CD8-positive, alpha-beta T cell (primary cell): ENCODE measurements at regions of chr10 and their contacts with region 1.

Region 1: GRCh38 chr10:70106958-70107791 is 25.4 kb downstream of the AIFM2 start:
- DNase-seq: peak in 3 of 9 experiments; percentile 27 to 44 (median 36)
- ATAC-seq: peak; percentile 40
- H3K4me3 ChIP-seq: no peak overlapping the region
- H3K4me3 Mint-ChIP-seq: no peak overlapping the region
- H3K27ac ChIP-seq: no peak overlapping the region
- H3K27ac Mint-ChIP-seq: peak overlapping the region; percentile 22
- H3K4me1 ChIP-seq: no peaks in the 10 kb centered on the region
- H3K4me1 Mint-ChIP-seq: no peaks in the 10 kb centered on the region
- H3K27me3 ChIP-seq: no peaks in the 10 kb centered on the region
- H3K27me3 Mint-ChIP-seq: no peaks in the 10 kb centered on the region
- CTCF ChIP-seq: peak; percentile 23

Region 2: DNA sequence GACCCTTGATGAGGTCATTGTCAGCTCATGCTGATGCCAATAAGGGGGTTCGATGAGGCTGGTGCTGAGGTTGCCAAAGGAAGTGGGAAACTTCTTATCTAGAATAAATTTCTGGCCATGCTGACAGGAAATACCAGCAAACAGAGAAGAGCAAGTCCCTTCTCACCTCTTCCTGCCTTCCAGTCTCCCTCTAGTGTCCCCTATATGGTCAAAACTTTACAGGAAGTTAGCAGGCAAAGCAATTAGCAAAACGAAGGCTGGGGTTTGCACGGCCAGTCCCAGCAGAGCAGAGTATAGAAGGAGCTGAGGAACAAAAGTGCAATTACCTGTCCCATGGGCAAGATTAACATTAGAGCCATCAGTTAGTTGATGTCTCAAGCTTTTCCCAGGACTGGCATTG is 518.8 kb before region 1 on chr10:
- CTCF ChIA-PET with region 1: no interaction called
- POLR2A ChIA-PET with region 1: no interaction called
- intact Hi-C with region 1: no loop called
- DNase-seq: peak in 1 of 9 experiments; percentile 12
- ATAC-seq: no peak
- H3K4me3 ChIP-seq: no peak overlapping the region
- H3K4me3 Mint-ChIP-seq: no peak overlapping the region
- H3K27ac ChIP-seq: no peak overlapping the region
- H3K27ac Mint-ChIP-seq: peak overlapping the region; percentile 12
- H3K4me1 ChIP-seq: peaks cover 16% of the 10 kb centered on the region
- H3K4me1 Mint-ChIP-seq: peaks cover 13% of the 10 kb centered on the region
- H3K27me3 ChIP-seq: no peaks in the 10 kb centered on the region
- H3K27me3 Mint-ChIP-seq: no peaks in the 10 kb centered on the region
- CTCF ChIP-seq: no peak

Region 3: DNA sequence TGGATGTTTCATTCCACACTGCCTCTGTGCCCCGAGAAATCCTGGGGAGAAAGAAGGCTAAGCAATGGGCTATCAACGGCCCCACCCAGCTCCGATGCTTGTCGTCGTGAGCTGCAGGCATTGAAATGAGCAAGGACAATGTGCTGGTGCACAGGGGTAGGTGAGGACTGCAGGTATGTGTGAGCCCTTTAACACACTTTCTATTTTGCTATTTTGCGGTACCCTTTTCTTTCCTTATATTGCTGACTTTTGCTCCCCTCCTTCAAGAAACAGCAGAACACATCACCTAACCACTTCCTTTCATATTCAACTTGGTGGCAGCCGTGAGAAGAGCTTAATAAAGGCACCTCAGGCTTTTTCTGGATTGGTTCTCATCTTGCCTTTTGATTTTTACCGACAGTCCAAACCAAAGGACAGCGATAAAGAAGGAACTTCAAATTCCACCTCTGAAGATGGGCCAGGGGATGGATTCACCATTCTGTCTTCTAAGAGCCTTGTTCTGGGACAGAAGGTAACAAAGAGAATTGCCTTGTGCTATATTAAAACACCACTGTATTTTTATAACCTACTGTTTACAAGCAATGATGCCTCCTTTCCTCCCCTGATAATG is 13.7 kb before region 1 on chr10:
- CTCF ChIA-PET with region 1: interaction called, 14 read pairs
- POLR2A ChIA-PET with region 1: interaction called, 3 read pairs
- intact Hi-C with region 1: no loop called
- DNase-seq: peak in 7 of 9 experiments; percentile 3 to 73 (median 18)
- ATAC-seq: peak; percentile 68
- H3K4me3 ChIP-seq: peak overlapping the region; percentile 54 to 70
- H3K4me3 Mint-ChIP-seq: peak overlapping the region; percentile 75
- H3K27ac ChIP-seq: peak overlapping the region; percentile 47 to 84
- H3K27ac Mint-ChIP-seq: peak overlapping the region; percentile 95
- H3K4me1 ChIP-seq: peaks cover 35% of the 10 kb centered on the region
- H3K4me1 Mint-ChIP-seq: peaks cover 62% of the 10 kb centered on the region
- H3K27me3 ChIP-seq: no peaks in the 10 kb centered on the region
- H3K27me3 Mint-ChIP-seq: no peaks in the 10 kb centered on the region
- CTCF ChIP-seq: no peak

Region 4: DNA sequence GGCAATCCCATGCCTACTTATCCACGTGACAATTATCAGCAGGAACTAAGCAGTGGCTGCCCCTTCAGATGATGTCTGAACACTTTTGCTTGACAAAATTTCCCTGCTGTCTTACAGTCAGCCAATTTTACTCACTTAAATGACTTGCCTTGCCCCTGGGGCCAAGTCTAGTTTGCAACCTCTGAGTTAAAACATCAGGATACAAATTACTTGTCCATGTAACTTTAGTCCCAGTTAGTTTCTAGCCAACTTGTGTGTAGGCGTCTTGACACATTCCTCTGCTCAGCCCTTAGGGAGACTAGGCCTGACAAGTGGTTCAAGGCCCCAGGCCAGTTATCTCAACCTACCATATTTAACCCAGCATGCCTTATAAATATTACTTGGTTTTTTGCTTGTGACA is 50.9 kb after region 1 on chr10:
- CTCF ChIA-PET with region 1: no interaction called
- POLR2A ChIA-PET with region 1: no interaction called
- intact Hi-C with region 1: no loop called
- DNase-seq: no peak
- ATAC-seq: no peak
- H3K4me3 ChIP-seq: no peak overlapping the region
- H3K4me3 Mint-ChIP-seq: no peak overlapping the region
- H3K27ac ChIP-seq: no peak overlapping the region
- H3K27ac Mint-ChIP-seq: no peak overlapping the region
- H3K4me1 ChIP-seq: peaks cover 19% of the 10 kb centered on the region
- H3K4me1 Mint-ChIP-seq: peaks cover 45% of the 10 kb centered on the region
- H3K27me3 ChIP-seq: no peaks in the 10 kb centered on the region
- H3K27me3 Mint-ChIP-seq: no peaks in the 10 kb centered on the region
- CTCF ChIP-seq: no peak